ENCODE measurements at regions of chr4 and their contacts with region 1.

Region 1: DNA sequence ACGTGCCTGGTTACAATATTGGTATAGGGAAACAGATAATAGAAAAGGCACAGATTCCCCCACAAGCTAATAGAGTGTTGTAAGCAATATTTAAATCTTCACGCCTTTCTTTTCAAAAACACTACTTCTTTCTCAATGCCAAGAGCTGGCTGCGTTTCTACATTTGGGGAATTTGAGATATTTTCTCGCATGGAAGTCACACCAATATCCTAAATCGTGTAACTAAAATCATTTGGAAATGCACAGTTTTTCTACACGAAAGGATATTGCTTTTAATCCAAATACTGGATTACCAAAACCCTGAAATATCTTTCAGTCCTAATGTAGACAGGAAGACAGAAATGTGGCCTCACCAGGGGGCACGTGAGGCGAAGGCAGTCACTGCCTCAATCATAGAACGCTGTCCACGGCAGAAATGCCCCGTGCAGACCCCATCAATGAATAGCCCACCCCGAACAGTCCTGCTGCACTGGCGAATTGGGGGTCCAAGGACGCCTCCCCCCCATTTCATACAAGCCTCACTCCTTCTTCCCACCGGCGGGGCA is 106.6 kb downstream of the NSUN7 start:
- DNase-seq: no peak
- H3K4me3 ChIP-seq: peak overlapping the region; percentile 32
- H3K4me3 Mint-ChIP-seq: peak overlapping the region in 5 of 7 donors; percentile 15 to 88 (median 60)
- H3K27ac ChIP-seq: no peak overlapping the region
- H3K27ac Mint-ChIP-seq: peak overlapping the region in 1 of 8 donors; percentile 21
- H3K4me1 ChIP-seq: peaks cover 5% of the 10 kb centered on the region
- H3K4me1 Mint-ChIP-seq: peaks cover 6 to 17% (median 14%) of the 10 kb centered on the region in 3 donors
- H3K27me3 ChIP-seq: peaks cover 8% of the 10 kb centered on the region
- H3K27me3 Mint-ChIP-seq: peaks cover 29 to 72% of the 10 kb centered on the region in 2 donors

Region 2: GRCh38 chr4:40825014-40825838 is 31.1 kb before region 1 on chr4:
- CTCF ChIA-PET with region 1: no interaction called
- POLR2A ChIA-PET with region 1: no interaction called
- DNase-seq: no peak
- H3K4me3 ChIP-seq: no peak overlapping the region
- H3K4me3 Mint-ChIP-seq: no peak overlapping the region
- H3K27ac ChIP-seq: no peak overlapping the region
- H3K27ac Mint-ChIP-seq: no peak overlapping the region
- H3K4me1 ChIP-seq: no peaks in the 10 kb centered on the region
- H3K4me1 Mint-ChIP-seq: peaks cover 0 to 6% (median 0%) of the 10 kb centered on the region in 3 donors
- H3K27me3 ChIP-seq: no peaks in the 10 kb centered on the region
- H3K27me3 Mint-ChIP-seq: peaks cover 2 to 13% of the 10 kb centered on the region in 2 donors

Region 3: DNA sequence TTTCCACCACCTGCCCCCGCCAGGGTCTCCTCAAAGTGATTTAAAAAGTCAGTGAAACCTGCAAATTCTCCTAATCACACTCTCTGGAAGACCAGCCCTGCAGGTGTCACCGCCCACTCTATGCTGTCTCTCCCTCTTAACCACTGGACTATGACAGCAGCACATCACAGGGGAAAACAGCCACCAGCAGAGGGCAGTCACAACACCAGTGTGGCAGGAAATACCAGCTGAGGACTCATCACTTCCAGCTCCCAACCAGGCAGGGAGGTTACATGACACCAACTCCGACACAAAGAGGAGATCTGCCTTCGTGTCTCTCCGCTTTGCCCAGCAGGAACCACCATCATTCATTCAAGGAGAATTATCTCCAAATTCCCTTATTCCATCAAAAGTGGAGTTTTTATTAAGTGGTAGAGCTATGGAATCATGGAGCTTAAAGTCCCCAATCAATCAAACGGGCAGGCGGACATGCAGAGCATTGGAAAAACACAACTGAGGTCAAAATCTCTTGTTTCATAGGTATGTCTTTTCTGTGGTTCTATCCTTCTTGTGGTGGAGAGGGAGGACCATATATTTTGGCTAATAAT is 15.3 kb before region 1 on chr4:
- CTCF ChIA-PET with region 1: interaction called, 11 read pairs
- POLR2A ChIA-PET with region 1: no interaction called
- DNase-seq: peak in 4 of 5 donors; percentile 5 to 59 (median 22)
- H3K4me3 ChIP-seq: no peak overlapping the region
- H3K4me3 Mint-ChIP-seq: no peak overlapping the region
- H3K27ac ChIP-seq: no peak overlapping the region
- H3K27ac Mint-ChIP-seq: no peak overlapping the region
- H3K4me1 ChIP-seq: no peaks in the 10 kb centered on the region
- H3K4me1 Mint-ChIP-seq: no peaks in the 10 kb centered on the region
- H3K27me3 ChIP-seq: no peaks in the 10 kb centered on the region
- H3K27me3 Mint-ChIP-seq: peaks cover 4 to 19% of the 10 kb centered on the region in 2 donors